ENCODE measurements at regions of chr18 and their contacts with region 1.

Region 1: GRCh38 chr18:23032030-23032582 is 99.0 kb downstream of the RBBP8 start:
- DNase-seq: no peak
- ATAC-seq: no peak
- H3K4me3 Mint-ChIP-seq: no peak overlapping the region
- H3K27ac Mint-ChIP-seq: no peak overlapping the region
- H3K4me1 Mint-ChIP-seq: peaks cover 13% of the 10 kb centered on the region
- H3K27me3 Mint-ChIP-seq: no peaks in the 10 kb centered on the region
- CTCF ChIP-seq: no peak

Region 2: GRCh38 chr18:22822024-22822423 is 210.1 kb before region 1 on chr18:
- CTCF ChIA-PET with region 1: no interaction called
- POLR2A ChIA-PET with region 1: no interaction called
- DNase-seq: no peak
- ATAC-seq: peak; percentile 98
- H3K4me3 Mint-ChIP-seq: no peak overlapping the region
- H3K27ac Mint-ChIP-seq: no peak overlapping the region
- H3K4me1 Mint-ChIP-seq: peaks cover 7% of the 10 kb centered on the region; the same call in 1 of the 2 replicates
- H3K27me3 Mint-ChIP-seq: no peaks in the 10 kb centered on the region
- CTCF ChIP-seq: no peak

Region 3: DNA sequence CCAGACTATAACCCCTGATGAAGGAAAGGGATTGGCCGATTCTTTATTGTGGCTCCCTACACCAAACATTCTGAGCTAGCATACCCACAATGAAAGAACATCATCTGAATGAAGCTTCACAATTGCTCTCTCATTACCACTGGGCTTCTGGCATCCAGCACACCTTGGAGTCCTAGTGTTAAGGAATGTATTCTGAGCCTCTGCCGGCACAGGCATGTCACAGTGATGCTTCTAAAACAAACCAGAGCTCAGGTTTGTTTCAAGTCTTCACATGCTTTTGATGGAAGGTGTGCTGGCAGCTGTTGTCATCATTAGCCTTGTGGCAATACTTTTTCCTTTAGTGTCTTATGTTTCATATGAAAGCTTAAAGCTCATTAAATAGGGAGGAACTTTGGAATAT is 175.2 kb before region 1 on chr18:
- CTCF ChIA-PET with region 1: no interaction called
- POLR2A ChIA-PET with region 1: no interaction called
- DNase-seq: peak; percentile 19
- ATAC-seq: peak; percentile 100
- H3K4me3 Mint-ChIP-seq: no peak overlapping the region
- H3K27ac Mint-ChIP-seq: no peak overlapping the region
- H3K4me1 Mint-ChIP-seq: peaks cover 11% of the 10 kb centered on the region
- H3K27me3 Mint-ChIP-seq: no peaks in the 10 kb centered on the region; the same call in 1 of the 2 replicates
- CTCF ChIP-seq: no peak

Region 4: DNA sequence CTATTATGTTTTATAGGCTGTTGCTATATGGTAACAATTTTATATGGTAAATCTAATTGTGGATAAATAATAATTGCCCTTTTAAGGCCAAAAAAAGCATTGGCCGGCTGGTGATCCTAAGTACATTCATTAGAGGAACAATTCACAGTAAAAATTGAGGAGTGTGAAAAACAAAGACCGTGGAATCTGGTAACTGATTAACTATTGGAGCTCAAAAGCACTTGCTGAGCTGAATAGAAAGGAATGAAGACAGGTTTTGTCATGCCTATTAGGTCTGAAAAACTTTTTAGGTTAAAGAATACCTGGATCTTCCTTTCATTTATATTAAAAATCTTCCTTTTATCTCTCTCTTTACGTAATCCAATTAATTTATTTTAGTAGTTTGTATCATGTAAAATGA is 117.5 kb before region 1 on chr18:
- CTCF ChIA-PET with region 1: no interaction called
- POLR2A ChIA-PET with region 1: no interaction called
- DNase-seq: no peak
- ATAC-seq: 0 out of 2 replicates have a peak, but pooled peaks have one; percentile 18
- H3K4me3 Mint-ChIP-seq: peak overlapping the region; percentile 41; the same call in 1 of the 2 replicates
- H3K27ac Mint-ChIP-seq: peak overlapping the region; percentile 55
- H3K4me1 Mint-ChIP-seq: peaks cover 51% of the 10 kb centered on the region
- H3K27me3 Mint-ChIP-seq: no peaks in the 10 kb centered on the region
- CTCF ChIP-seq: no peak

Region 5: GRCh38 chr18:23178661-23179081 is 146.6 kb after region 1 on chr18:
- CTCF ChIA-PET with region 1: no interaction called
- POLR2A ChIA-PET with region 1: no interaction called
- DNase-seq: no peak
- ATAC-seq: no peak
- H3K4me3 Mint-ChIP-seq: no peak overlapping the region
- H3K27ac Mint-ChIP-seq: peak overlapping the region; percentile 35; the same call in 1 of the 2 replicates
- H3K4me1 Mint-ChIP-seq: peaks cover 59% of the 10 kb centered on the region
- H3K27me3 Mint-ChIP-seq: no peaks in the 10 kb centered on the region
- CTCF ChIP-seq: no peak

Region 6: GRCh38 chr18:23412351-23412964 is 380.4 kb after region 1 on chr18:
- CTCF ChIA-PET with region 1: interaction called, 12 read pairs
- POLR2A ChIA-PET with region 1: no interaction called
- DNase-seq: no peak
- ATAC-seq: no peak
- H3K4me3 Mint-ChIP-seq: no peak overlapping the region
- H3K27ac Mint-ChIP-seq: no peak overlapping the region
- H3K4me1 Mint-ChIP-seq: no peaks in the 10 kb centered on the region
- H3K27me3 Mint-ChIP-seq: no peaks in the 10 kb centered on the region
- CTCF ChIP-seq: no peak

Measured in WTC11 (cell line).